Panc1 (cell line): ENCODE measurements at regions of chr12 and their contacts with region 1.

Region 1: DNA sequence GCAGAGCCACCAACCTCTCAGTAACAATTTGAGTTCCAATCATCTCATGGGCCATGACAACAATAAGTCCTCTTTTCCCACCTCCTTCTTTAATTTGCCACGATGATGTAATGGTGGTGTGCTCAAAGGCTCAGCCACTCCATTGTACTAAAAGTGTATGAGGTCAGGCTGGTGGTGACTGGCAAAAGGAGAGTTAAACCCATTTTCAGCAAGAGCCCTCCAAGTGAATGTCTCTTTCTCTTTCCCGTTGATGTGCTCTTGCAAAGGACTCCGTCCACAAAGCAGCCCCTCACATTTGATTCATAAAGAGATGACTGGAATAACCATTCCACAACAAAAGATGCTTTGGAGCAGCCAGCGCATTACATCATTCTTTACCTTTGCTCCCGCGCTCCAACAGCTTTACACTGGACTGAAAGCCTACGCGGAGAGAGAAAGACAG is 41.6 kb downstream of the DUSP16 start:
- DNase-seq: no peak
- ATAC-seq: no peak
- H3K4me3 ChIP-seq: no peak overlapping the region
- H3K27ac ChIP-seq: no peak overlapping the region
- H3K4me1 ChIP-seq: no peaks in the 10 kb centered on the region
- H3K27me3 ChIP-seq: no peaks in the 10 kb centered on the region
- CTCF ChIP-seq: no peak

Region 2: GRCh38 chr12:12408265-12408690 is 112.8 kb before region 1 on chr12:
- CTCF ChIA-PET with region 1: no interaction called
- POLR2A ChIA-PET with region 1: no interaction called
- in situ Hi-C with region 1: no loop called
- intact Hi-C with region 1: no loop called
- DNase-seq: no peak
- ATAC-seq: no peak
- H3K4me3 ChIP-seq: no peak overlapping the region
- H3K27ac ChIP-seq: no peak overlapping the region
- H3K4me1 ChIP-seq: no peaks in the 10 kb centered on the region
- H3K27me3 ChIP-seq: no peaks in the 10 kb centered on the region
- CTCF ChIP-seq: no peak

Region 3: GRCh38 chr12:12716793-12717585 is 195.9 kb after region 1 on chr12 and contains the start of gene CDKN1B:
- CTCF ChIA-PET with region 1: no interaction called
- POLR2A ChIA-PET with region 1: interaction called, 11 read pairs
- in situ Hi-C with region 1: no loop called
- intact Hi-C with region 1: no loop called
- DNase-seq: no peak
- ATAC-seq: peak; percentile 86
- H3K4me3 ChIP-seq: peak within 1 kb of the TSS; percentile 72 to 93
- H3K27ac ChIP-seq: peak within 1 kb of the TSS; percentile 99
- H3K4me1 ChIP-seq: peaks cover 35% of the 10 kb centered on the region
- H3K27me3 ChIP-seq: no peaks in the 10 kb centered on the region
- CTCF ChIP-seq: no peak
- total RNA-seq, gene CDKN1B: 25.9 TPM